ENCODE measurements at regions of chr4 and their contacts with region 1.

Region 1: GRCh38 chr4:88378691-88379559 is at the start of gene HERC6:
- DNase-seq: peak; percentile 85
- ATAC-seq: peak; percentile 98
- total RNA-seq, gene HERC6: 6.3 TPM

Region 2: GRCh38 chr4:88456757-88457306 is 77.9 kb after region 1 on chr4 and contains the start of gene HERC5:
- intact Hi-C with region 1: loop called (anchors 5 kb)
- DNase-seq: peak; percentile 94
- ATAC-seq: peak; percentile 95
- total RNA-seq, gene HERC5: 1.5 TPM

Region 3: GRCh38 chr4:88503344-88503743 is 124.4 kb after region 1 on chr4:
- intact Hi-C with region 1: loop called (anchors 10 kb)
- DNase-seq: no peak
- ATAC-seq: no peak

Region 4: GRCh38 chr4:88533937-88534750 is 155.2 kb after region 1 on chr4:
- intact Hi-C with region 1: no loop called
- DNase-seq: no peak
- ATAC-seq: no peak